Activated CD4-positive, alpha-beta memory T cell treated with anti-CD3 and anti-CD28 coated beads for 36 hours (primary cell): ENCODE measurements at regions of chr12 and their contacts with region 1.

Region 1: DNA sequence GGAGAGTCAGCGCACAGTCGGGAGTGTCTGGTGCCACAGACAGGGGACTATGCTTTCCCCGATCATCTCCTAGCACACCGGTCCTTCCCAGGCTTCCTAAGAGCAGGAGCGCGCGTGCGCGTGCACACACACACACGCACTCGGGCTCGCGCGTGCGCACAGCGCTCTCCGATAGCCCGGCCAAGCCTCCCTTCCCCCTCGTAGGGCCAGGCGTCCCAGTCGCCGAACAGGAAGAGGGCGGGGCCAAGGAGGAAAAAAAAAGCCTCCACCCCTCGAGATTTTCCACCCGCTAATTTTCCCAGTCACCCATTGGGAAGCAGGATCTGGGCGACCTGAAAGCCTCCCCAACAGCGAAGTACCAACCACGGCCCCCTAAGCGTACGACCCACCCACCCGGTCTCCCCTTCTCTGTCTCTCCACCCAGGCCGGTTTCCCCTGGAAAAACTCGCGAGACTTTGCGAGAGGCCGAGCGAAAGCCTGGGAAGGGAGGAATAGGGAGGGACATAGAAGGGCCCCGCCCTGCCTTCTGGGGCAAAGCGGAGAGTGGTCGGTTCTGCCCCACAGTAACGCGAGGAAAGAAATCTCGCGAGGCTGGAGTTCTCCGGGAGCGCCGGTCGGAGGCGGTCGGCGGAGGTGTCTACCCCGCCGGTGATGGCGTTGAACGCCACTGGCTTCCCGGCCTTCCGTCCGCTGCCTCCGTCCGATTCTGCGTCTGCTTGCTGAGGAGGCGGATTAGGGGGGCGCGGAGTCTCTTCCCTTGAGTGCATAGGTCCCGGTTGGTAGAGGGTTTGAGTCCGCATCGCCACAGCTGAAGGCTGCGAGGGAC is at the starts of genes FGFR1OP2 and INTS13:
- DNase-seq: peak; percentile 98
- H3K4me3 Mint-ChIP-seq: peak within 1 kb of the TSS; percentile 94
- H3K27ac Mint-ChIP-seq: peak within 1 kb of the TSS; percentile 98
- H3K4me1 Mint-ChIP-seq: peaks cover 48% of the 10 kb centered on the region
- H3K27me3 Mint-ChIP-seq: no peaks in the 10 kb centered on the region
- total RNA-seq, gene FGFR1OP2: 49.1 to 50.7 TPM
- total RNA-seq, gene INTS13: 54.5 to 54.8 TPM

Region 2: GRCh38 chr12:26651566-26652188 is 286.4 kb before region 1 on chr12:
- CTCF ChIA-PET with region 1: no interaction called
- POLR2A ChIA-PET with region 1: no interaction called
- intact Hi-C with region 1: no loop called
- DNase-seq: peak; percentile 50
- H3K4me3 Mint-ChIP-seq: no peak overlapping the region
- H3K27ac Mint-ChIP-seq: no peak overlapping the region
- H3K4me1 Mint-ChIP-seq: no peaks in the 10 kb centered on the region
- H3K27me3 Mint-ChIP-seq: no peaks in the 10 kb centered on the region

Region 3: DNA sequence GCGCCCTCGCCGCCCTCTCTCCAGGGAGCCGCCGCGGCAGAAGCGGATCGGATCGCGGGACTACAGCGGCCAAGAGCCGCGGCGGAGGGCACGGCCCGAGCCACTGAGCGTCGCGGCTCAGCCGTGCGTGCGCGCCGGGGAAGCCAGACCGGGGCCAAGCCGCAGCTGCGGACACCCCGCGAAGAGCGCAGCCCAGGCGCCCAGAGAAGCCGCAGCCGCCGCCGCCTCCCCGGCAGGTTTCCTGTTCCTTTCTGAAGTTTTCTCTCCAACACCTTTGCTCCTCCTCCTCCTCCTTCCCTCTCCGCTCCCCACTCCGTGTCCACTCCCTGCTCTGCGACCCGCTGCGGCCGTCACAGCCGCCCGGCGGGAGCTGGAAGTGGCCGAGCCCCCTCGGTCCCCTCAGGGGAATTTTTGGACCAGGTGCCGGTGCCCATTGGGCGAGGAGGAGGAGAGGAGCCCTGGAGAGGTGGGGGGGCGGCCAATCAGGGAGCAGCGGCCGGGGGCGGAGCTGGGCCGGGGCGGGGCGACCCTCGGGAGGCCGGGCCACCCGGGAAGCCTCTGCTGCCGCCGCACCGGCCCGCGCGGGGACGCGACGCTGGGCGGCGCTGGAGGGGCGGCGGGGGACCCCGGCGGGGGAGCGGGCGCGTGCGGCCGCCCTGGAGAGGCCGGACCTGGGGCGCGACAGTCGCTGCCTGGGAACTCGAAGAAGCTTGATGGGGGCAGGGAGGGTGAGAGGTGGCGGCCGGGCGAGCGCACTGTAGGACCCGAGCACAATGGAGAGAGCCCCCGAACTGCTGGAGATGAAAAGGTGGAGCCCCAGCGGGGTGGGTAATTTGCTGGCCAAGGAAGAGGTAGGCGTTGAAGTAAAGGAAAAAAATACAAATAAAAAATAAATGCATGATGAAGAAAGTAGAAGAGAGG is 105.0 kb before region 1 on chr12 and contains the start of gene ITPR2:
- CTCF ChIA-PET with region 1: no interaction called
- POLR2A ChIA-PET with region 1: interaction called, 4 read pairs
- intact Hi-C with region 1: loop called (anchors 1 kb)
- DNase-seq: peak; percentile 96
- H3K4me3 Mint-ChIP-seq: peak within 1 kb of the TSS; percentile 99
- H3K27ac Mint-ChIP-seq: peak within 1 kb of the TSS; percentile 98
- H3K4me1 Mint-ChIP-seq: peaks cover 34% of the 10 kb centered on the region
- H3K27me3 Mint-ChIP-seq: no peaks in the 10 kb centered on the region
- total RNA-seq, gene ITPR2: 23.7 to 25.0 TPM

Region 4: DNA sequence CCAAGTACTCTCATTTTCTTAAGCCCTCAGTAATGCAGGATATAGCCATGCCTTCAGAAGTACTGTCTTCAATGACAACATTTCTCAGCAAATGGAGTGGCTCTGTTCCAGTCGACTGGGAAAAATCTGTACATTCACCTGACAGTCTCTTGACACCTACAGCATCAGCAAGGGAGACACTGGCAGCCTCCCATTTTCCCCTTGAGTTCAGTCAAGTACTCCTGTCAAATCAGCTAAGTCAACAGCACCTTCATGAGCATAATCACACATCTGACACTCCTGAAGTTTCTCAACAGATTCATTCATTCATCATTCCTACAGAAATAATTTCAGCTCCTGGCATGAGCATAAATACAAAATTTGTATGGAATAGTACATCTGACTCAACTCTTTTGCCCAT is 46.4 kb before region 1 on chr12:
- CTCF ChIA-PET with region 1: no interaction called
- POLR2A ChIA-PET with region 1: no interaction called
- intact Hi-C with region 1: no loop called
- DNase-seq: no peak
- H3K4me3 Mint-ChIP-seq: no peak overlapping the region
- H3K27ac Mint-ChIP-seq: no peak overlapping the region
- H3K4me1 Mint-ChIP-seq: no peaks in the 10 kb centered on the region
- H3K27me3 Mint-ChIP-seq: no peaks in the 10 kb centered on the region

Region 5: GRCh38 chr12:26954027-26954426 is 15.9 kb after region 1 on chr12:
- CTCF ChIA-PET with region 1: no interaction called
- POLR2A ChIA-PET with region 1: no interaction called
- intact Hi-C with region 1: loop called (anchors 2 kb)
- DNase-seq: no peak
- H3K4me3 Mint-ChIP-seq: no peak overlapping the region
- H3K27ac Mint-ChIP-seq: no peak overlapping the region
- H3K4me1 Mint-ChIP-seq: peaks cover 39% of the 10 kb centered on the region
- H3K27me3 Mint-ChIP-seq: no peaks in the 10 kb centered on the region

Region 6: DNA sequence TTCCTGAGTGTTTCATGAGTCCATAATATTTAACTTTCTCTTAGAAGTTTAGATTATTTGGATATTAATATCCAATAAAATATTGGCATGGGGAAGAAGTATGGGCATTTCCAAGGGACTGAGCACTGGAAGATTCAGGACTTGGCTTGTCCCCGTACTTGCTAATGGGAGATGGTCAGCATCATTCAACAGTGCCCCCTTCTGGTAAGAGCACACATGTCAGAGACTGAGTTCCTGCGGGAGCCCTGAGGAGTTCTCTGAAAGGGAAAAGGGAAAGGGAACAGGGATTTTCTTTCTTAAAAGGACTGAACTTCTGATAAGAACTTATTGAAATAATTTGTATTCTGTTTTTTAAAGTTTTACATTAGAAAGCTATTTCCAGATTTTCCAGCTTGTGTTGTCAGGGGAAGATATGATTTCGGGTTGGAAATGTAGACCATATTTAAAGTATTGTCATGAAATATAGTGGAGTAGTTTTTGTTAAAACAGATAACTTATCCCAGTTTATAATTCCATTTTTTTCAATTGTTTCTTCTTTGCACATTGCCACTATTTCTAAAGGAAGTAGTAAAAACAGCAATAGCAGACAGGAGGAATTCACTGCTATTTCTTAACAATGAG is 204.1 kb after region 1 on chr12:
- CTCF ChIA-PET with region 1: no interaction called
- POLR2A ChIA-PET with region 1: no interaction called
- intact Hi-C with region 1: loop called (anchors 5 kb)
- DNase-seq: peak; percentile 51
- H3K4me3 Mint-ChIP-seq: no peak overlapping the region
- H3K27ac Mint-ChIP-seq: no peak overlapping the region
- H3K4me1 Mint-ChIP-seq: peaks cover 6% of the 10 kb centered on the region
- H3K27me3 Mint-ChIP-seq: no peaks in the 10 kb centered on the region

Region 7: DNA sequence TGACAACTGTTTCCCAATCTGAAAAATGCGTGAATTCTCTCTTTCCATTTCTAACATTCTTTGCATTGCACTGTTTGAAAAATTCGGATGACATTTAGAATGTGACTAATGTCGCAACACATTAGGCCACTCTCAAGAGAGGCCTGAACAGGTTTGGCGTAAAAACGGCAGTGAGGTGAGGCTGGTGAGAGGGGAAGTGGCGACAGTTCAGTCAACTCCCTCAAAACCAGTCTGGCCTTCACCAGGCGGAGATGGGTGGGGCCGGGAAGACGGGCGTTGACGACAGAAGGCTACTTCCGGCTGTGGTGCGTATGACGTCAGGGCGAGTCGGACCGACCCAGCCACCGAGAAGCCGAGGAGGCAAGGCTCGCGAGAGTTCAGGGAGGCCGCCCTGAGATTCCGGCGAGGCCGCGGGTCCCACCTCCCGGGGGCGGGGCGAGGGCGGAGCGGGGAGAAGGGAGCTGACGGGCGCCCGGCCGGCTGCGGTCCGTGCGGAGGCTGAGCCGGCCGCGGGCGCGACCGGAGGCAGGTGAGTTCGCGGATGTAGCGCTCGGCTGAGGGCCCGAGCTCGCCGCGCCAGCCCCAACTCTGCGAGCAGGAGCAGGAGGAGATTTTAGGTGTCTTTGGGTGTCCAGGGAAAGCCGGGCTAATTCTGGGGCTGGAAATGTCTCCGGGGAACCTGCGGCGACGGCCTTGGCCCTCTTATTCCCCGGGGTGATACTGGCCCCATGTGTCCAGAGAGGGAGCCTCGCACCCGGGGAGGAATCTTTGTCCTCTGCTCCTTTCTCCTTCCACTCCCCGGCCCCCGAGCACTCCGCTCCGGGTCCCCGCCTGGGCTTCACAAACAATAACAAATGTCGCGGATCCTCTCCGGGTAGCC is 306.0 kb after region 1 on chr12 and contains the start of gene STK38L:
- CTCF ChIA-PET with region 1: no interaction called
- POLR2A ChIA-PET with region 1: no interaction called
- intact Hi-C with region 1: loop called (anchors 1 kb)
- DNase-seq: peak; percentile 98
- H3K4me3 Mint-ChIP-seq: peak within 1 kb of the TSS; percentile 100
- H3K27ac Mint-ChIP-seq: peak within 1 kb of the TSS; percentile 91
- H3K4me1 Mint-ChIP-seq: peaks cover 45% of the 10 kb centered on the region
- H3K27me3 Mint-ChIP-seq: no peaks in the 10 kb centered on the region
- total RNA-seq, gene STK38L: 25.1 to 25.2 TPM